Panc1 (cell line): ENCODE measurements at regions of chr18 and their contacts with region 1.

Region 1: DNA sequence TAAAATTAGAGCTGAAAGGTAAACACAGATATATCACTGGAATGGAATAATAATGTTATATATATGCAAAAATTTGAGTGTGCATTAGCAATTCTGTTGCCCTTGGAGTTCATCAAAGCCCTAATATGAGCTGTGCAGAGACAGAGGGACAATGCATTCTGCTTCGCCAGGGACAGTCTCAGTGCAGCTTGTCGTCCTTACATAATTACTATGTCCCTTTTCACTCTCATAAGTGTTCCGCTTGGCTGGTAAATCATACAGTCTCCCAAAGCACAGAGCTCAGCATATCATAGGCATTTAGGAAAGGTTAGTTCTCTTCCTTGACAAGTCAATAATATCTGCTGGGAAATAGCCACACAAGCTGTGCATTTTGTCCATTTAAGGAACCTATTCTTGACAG is 30.7 kb downstream of the MAPK4 start:
- DNase-seq: no peak
- ATAC-seq: no peak
- H3K4me3 ChIP-seq: no peak overlapping the region
- H3K27ac ChIP-seq: no peak overlapping the region
- H3K4me1 ChIP-seq: no peaks in the 10 kb centered on the region
- H3K27me3 ChIP-seq: no peaks in the 10 kb centered on the region
- CTCF ChIP-seq: no peak

Region 2: GRCh38 chr18:50675043-50675442 is 84.5 kb after region 1 on chr18:
- CTCF ChIA-PET with region 1: no interaction called
- POLR2A ChIA-PET with region 1: interaction called, 14 read pairs
- in situ Hi-C with region 1: no loop called
- intact Hi-C with region 1: no loop called
- DNase-seq: no peak
- ATAC-seq: no peak
- H3K4me3 ChIP-seq: no peak overlapping the region
- H3K27ac ChIP-seq: no peak overlapping the region
- H3K4me1 ChIP-seq: no peaks in the 10 kb centered on the region
- H3K27me3 ChIP-seq: no peaks in the 10 kb centered on the region
- CTCF ChIP-seq: no peak